CD4-positive, alpha-beta memory T cell (primary cell): ENCODE measurements at regions of chr4 and their contacts with region 1.

Region 1: GRCh38 chr4:26459054-26459755 is 31.1 kb downstream of the CCKAR start:
- DNase-seq: peak in 4 of 5 donors; percentile 34 to 53 (median 44)
- H3K4me3 ChIP-seq: no peak overlapping the region
- H3K4me3 Mint-ChIP-seq: peak overlapping the region in 7 of 8 donors; percentile 50 to 77 (median 64)
- H3K27ac ChIP-seq: no peak overlapping the region
- H3K27ac Mint-ChIP-seq: peak overlapping the region in 2 of 7 donors; percentile 3 to 47
- H3K4me1 ChIP-seq: no peaks in the 10 kb centered on the region
- H3K4me1 Mint-ChIP-seq: peaks cover 6 to 13% (median 10%) of the 10 kb centered on the region in 4 donors
- H3K27me3 ChIP-seq: no peaks in the 10 kb centered on the region
- H3K27me3 Mint-ChIP-seq: peaks cover 0 to 2% of the 10 kb centered on the region in 2 donors

Region 2: GRCh38 chr4:24456431-24456830 is 2002.8 kb before region 1 on chr4:
- CTCF ChIA-PET with region 1: no interaction called
- POLR2A ChIA-PET with region 1: no interaction called
- intact Hi-C with region 1: no loop called
- DNase-seq: no peak
- H3K4me3 ChIP-seq: no peak overlapping the region
- H3K4me3 Mint-ChIP-seq: no peak overlapping the region
- H3K27ac ChIP-seq: no peak overlapping the region
- H3K27ac Mint-ChIP-seq: no peak overlapping the region
- H3K4me1 ChIP-seq: no peaks in the 10 kb centered on the region
- H3K4me1 Mint-ChIP-seq: no peaks in the 10 kb centered on the region
- H3K27me3 ChIP-seq: no peaks in the 10 kb centered on the region
- H3K27me3 Mint-ChIP-seq: peaks cover 10 to 11% of the 10 kb centered on the region in 2 donors

Region 3: DNA sequence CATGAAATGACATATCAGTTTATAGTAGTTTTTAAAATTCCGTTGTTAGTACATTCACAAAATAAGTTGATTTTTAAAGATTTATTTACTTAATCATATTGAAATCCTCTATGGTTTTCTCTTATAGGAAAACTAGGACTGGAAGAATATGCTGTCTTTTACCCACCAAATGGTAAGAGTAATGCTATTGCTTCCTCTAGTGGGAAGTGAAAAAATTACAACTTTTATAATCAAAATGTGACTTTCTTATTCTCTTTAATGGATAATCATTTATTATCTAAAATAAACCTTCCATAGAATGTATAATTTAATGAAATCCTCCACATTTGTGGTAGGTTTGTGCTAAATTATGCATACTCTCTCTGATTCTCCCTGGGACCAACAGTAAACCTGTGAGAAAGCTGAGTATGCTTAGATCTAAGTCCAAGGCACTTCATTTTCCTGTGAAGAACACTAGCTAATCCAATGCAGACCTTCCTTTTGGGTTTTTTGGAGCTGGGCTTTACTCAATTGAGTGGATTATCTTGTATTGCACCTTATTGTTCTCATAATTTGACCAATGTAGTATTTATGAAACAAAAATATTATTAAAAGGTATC is 260.8 kb after region 1 on chr4:
- CTCF ChIA-PET with region 1: interaction called, 29 read pairs
- POLR2A ChIA-PET with region 1: interaction called, 3 read pairs
- intact Hi-C with region 1: loop called (anchors 2 kb)
- DNase-seq: no peak
- H3K4me3 ChIP-seq: no peak overlapping the region
- H3K4me3 Mint-ChIP-seq: no peak overlapping the region
- H3K27ac ChIP-seq: no peak overlapping the region
- H3K27ac Mint-ChIP-seq: no peak overlapping the region
- H3K4me1 ChIP-seq: no peaks in the 10 kb centered on the region
- H3K4me1 Mint-ChIP-seq: peaks cover 0 to 5% (median 3%) of the 10 kb centered on the region in 4 donors
- H3K27me3 ChIP-seq: no peaks in the 10 kb centered on the region
- H3K27me3 Mint-ChIP-seq: no peaks in the 10 kb centered on the region